CD8-positive, alpha-beta memory T cell (primary cell): ENCODE measurements at regions of chr6 and their contacts with region 1.

Region 1: GRCh38 chr6:122471107-122472021 is at the start of gene SERINC1:
- DNase-seq: peak; percentile 85 to 97 (median 91)
- H3K4me3 ChIP-seq: peak within 1 kb of the TSS; percentile 90
- H3K4me3 Mint-ChIP-seq: peak within 1 kb of the TSS; percentile 92 to 100 (median 100)
- H3K27ac ChIP-seq: peak within 1 kb of the TSS; percentile 99
- H3K27ac Mint-ChIP-seq: peak within 1 kb of the TSS; percentile 98 to 100 (median 100)
- H3K4me1 ChIP-seq: peaks cover 38% of the 10 kb centered on the region
- H3K4me1 Mint-ChIP-seq: peaks cover 49 to 51% (median 50%) of the 10 kb centered on the region in 3 donors
- H3K27me3 ChIP-seq: no peaks in the 10 kb centered on the region
- H3K27me3 Mint-ChIP-seq: peaks cover 0 to 2% of the 10 kb centered on the region in 2 donors
- total RNA-seq, gene SERINC1: 61.7 to 62.9 TPM

Region 2: GRCh38 chr6:122399384-122400158 is 71.8 kb before region 1 on chr6 and contains the start of gene HSF2:
- CTCF ChIA-PET with region 1: interaction called, 3 read pairs
- POLR2A ChIA-PET with region 1: interaction called, 11 read pairs
- DNase-seq: peak; percentile 86 to 97 (median 93)
- H3K4me3 ChIP-seq: peak within 1 kb of the TSS; percentile 89
- H3K4me3 Mint-ChIP-seq: peak within 1 kb of the TSS; percentile 92 to 99 (median 98)
- H3K27ac ChIP-seq: peak within 1 kb of the TSS; percentile 83
- H3K27ac Mint-ChIP-seq: peak within 1 kb of the TSS; percentile 85 to 98 (median 96)
- H3K4me1 ChIP-seq: peaks cover 42% of the 10 kb centered on the region
- H3K4me1 Mint-ChIP-seq: peaks cover 30 to 39% (median 39%) of the 10 kb centered on the region in 3 donors
- H3K27me3 ChIP-seq: no peaks in the 10 kb centered on the region
- H3K27me3 Mint-ChIP-seq: peaks cover 0 to 2% of the 10 kb centered on the region in 2 donors
- total RNA-seq, gene HSF2: 16.9 to 17.6 TPM